A549 (cell line): ENCODE measurements at regions of chr2 and their contacts with region 1.

Region 1: DNA sequence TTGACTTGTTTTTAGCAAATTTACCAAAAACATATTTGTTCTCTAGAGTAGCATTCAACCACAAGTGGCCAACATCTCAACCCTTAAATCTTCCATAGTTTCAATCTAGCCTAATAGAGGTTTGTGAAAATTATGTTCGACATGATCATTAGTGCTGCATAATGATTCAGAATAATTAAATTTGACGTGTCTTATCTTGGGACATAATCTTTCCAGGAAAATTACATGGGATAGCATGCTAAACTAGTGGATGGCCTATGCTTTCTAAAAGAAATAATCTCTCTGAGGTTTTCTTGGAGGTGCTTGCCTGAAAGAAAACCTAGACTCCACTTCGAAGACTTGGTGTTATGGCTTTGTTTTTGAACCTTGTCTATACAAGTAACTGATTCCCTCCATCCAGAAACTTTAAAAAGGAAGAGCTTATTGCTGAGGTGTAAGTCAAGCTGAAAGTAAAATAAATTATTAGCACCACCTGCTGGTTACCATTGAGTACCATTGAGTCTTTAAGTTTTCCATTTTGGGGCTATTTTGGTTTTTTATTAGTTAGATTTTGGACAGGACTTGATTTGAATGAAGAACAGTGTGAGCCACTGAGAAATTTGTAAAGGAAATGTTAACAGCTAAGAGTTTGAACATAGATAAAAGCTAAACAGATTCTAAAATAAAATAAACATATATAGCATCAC is 32.7 kb downstream of the COX7A2L start:
- DNase-seq: peak; percentile 36 to 49
- ATAC-seq: peak; percentile 65 to 81; a peak in 4 of 6 replicates
- H3K4me3 ChIP-seq: no peak overlapping the region
- H3K27ac ChIP-seq: no peak overlapping the region
- H3K4me1 ChIP-seq: peaks cover 18% of the 10 kb centered on the region
- CTCF ChIP-seq: peak; percentile 83
- EP300 ChIP-seq: no peak
- POLR2A ChIP-seq: no peak
- RAD21 ChIP-seq: peak; percentile 77 to 84

Region 2: GRCh38 chr2:42314892-42315467 is 13.3 kb before region 1 on chr2:
- CTCF ChIA-PET with region 1: interaction called, 23 read pairs
- POLR2A ChIA-PET with region 1: interaction called, 3 read pairs
- DNase-seq: peak; percentile 13 to 57
- ATAC-seq: peak; percentile 73 to 80
- H3K4me3 ChIP-seq: no peak overlapping the region
- H3K27ac ChIP-seq: peak overlapping the region; percentile 51 to 75
- H3K4me1 ChIP-seq: peaks cover 28% of the 10 kb centered on the region
- CTCF ChIP-seq: no peak
- EP300 ChIP-seq: no peak; a peak in 1 of 5 replicates
- POLR2A ChIP-seq: no peak
- RAD21 ChIP-seq: no peak

Region 3: GRCh38 chr2:42339191-42339912 is 11.1 kb after region 1 on chr2:
- CTCF ChIA-PET with region 1: interaction called, 20 read pairs
- POLR2A ChIA-PET with region 1: no interaction called
- DNase-seq: peak in 1 of 2 experiments; percentile 42
- ATAC-seq: peak; percentile 62 to 76; a peak in 5 of 6 replicates
- H3K4me3 ChIP-seq: no peak overlapping the region
- H3K27ac ChIP-seq: no peak overlapping the region
- H3K4me1 ChIP-seq: peaks cover 16% of the 10 kb centered on the region
- CTCF ChIP-seq: no peak
- EP300 ChIP-seq: no peak
- POLR2A ChIP-seq: no peak
- RAD21 ChIP-seq: no peak

Region 4: GRCh38 chr2:42345986-42346385 is 17.7 kb after region 1 on chr2:
- CTCF ChIA-PET with region 1: interaction called, 12 read pairs
- POLR2A ChIA-PET with region 1: no interaction called
- DNase-seq: no peak
- ATAC-seq: no peak
- H3K4me3 ChIP-seq: no peak overlapping the region
- H3K27ac ChIP-seq: no peak overlapping the region
- H3K4me1 ChIP-seq: peaks cover 16% of the 10 kb centered on the region
- CTCF ChIP-seq: no peak
- EP300 ChIP-seq: no peak
- POLR2A ChIP-seq: no peak
- RAD21 ChIP-seq: no peak

Region 5: GRCh38 chr2:42542871-42543270 is 214.6 kb after region 1 on chr2:
- CTCF ChIA-PET with region 1: no interaction called
- POLR2A ChIA-PET with region 1: no interaction called
- DNase-seq: no peak
- ATAC-seq: no peak
- H3K4me3 ChIP-seq: no peak overlapping the region
- H3K27ac ChIP-seq: no peak overlapping the region
- H3K4me1 ChIP-seq: no peaks in the 10 kb centered on the region
- CTCF ChIP-seq: no peak
- EP300 ChIP-seq: no peak
- POLR2A ChIP-seq: no peak
- RAD21 ChIP-seq: no peak